H1 (cell line): ENCODE measurements at regions of chr15 and their contacts with region 1.

Region 1: DNA sequence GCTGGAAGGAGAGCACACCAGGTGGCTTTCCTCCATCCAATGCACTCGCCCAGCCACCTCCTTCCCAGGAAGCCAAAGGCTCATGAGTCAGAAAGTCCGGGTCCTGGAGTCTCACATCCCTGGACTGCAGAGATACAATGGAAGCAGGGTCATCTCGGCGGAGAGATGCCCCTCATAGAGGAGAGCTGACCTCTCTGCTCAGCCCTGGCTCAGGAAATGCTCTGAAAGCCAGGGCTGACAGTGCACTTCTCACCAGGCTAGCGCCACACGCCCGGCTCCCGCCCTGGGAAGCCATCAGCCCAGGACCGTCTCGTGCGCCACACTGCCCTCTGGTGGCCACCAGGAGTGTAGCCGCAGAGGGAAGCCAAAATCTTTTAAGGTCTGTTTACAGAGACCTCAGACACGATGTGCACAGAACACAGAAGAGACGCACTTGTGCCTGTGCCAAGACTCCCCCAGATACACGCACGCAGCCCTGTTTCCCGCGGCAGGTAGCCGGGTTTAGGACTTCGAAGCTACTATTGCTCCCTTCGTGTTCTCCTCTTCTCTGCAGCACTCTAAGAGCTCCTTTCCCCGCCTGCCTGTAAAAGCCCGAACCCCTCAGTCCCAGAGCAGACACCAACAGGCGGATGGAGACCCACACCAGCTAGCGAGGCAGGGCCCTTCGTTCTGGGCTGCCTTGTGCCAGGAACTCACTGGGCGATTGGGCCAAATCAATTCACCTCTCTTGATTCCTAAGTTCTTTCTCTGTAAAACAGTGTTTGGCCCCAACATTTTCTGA is 9.7 kb downstream of the NTRK3 start:
- DNase-seq: peak; percentile 70 to 92
- H3K4me3 ChIP-seq: peak overlapping the region in 3 of 4 experiments; percentile 19 to 45 (median 34); a peak in 4 of 8 replicates
- H3K27ac ChIP-seq: no peak overlapping the region
- H3K4me1 ChIP-seq: peaks cover 0 to 7% (median 2%) of the 10 kb centered on the region in 4 experiments; a peak in 3 of 7 replicates
- H3K27me3 ChIP-seq: peaks cover 0 to 4% (median 2%) of the 10 kb centered on the region in 4 experiments; a peak in 3 of 7 replicates
- CTCF ChIP-seq: peak; percentile 92 to 96 (median 95)
- EP300 ChIP-seq: no peak
- POLR2A ChIP-seq: no peak
- RAD21 ChIP-seq: peak; percentile 80 to 85

Region 2: DNA sequence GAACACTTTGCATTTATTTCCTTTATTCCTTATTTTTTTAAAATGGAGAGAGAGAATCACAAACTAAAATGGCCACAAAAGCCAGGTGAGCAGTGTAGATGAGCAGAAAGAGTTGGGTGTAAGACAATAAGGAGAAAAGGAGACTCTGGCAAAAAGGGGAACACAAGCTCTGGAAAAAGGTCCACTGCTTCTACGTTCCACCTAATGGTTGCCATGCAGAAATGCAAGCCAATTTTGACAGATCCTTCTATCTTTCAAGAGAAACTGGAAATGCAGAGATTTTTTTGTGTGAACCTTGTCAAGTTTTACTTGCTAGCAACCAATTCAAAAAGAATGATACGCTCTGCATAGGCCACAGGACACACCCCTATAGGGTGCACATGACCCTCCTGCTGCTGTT is 237.6 kb before region 1 on chr15:
- CTCF ChIA-PET with region 1: interaction called, 26 read pairs
- POLR2A ChIA-PET with region 1: no interaction called
- DNase-seq: no peak
- H3K4me3 ChIP-seq: no peak overlapping the region
- H3K27ac ChIP-seq: no peak overlapping the region
- H3K4me1 ChIP-seq: no peaks in the 10 kb centered on the region
- H3K27me3 ChIP-seq: no peaks in the 10 kb centered on the region
- CTCF ChIP-seq: peak in 1 of 3 experiments; percentile 41; a peak in 2 of 4 replicates
- EP300 ChIP-seq: no peak
- POLR2A ChIP-seq: no peak
- RAD21 ChIP-seq: peak in 1 of 2 experiments; percentile 18; a peak in 1 of 4 replicates

Region 3: GRCh38 chr15:88208410-88208809 is 38.4 kb before region 1 on chr15:
- CTCF ChIA-PET with region 1: interaction called, 53 read pairs
- POLR2A ChIA-PET with region 1: no interaction called
- DNase-seq: no peak
- H3K4me3 ChIP-seq: no peak overlapping the region
- H3K27ac ChIP-seq: no peak overlapping the region
- H3K4me1 ChIP-seq: peaks cover 0 to 6% (median 4%) of the 10 kb centered on the region in 4 experiments; a peak in 2 of 7 replicates
- H3K27me3 ChIP-seq: no peaks in the 10 kb centered on the region; a peak in 1 of 7 replicates
- CTCF ChIP-seq: no peak
- EP300 ChIP-seq: no peak
- POLR2A ChIP-seq: no peak
- RAD21 ChIP-seq: no peak

Region 4: GRCh38 chr15:88258093-88258641 is 11.3 kb after region 1 on chr15:
- CTCF ChIA-PET with region 1: interaction called, 45 read pairs
- POLR2A ChIA-PET with region 1: interaction called, 6 read pairs
- DNase-seq: peak; percentile 44 to 89
- H3K4me3 ChIP-seq: peak overlapping the region; percentile 70 to 91 (median 82)
- H3K27ac ChIP-seq: no peak overlapping the region
- H3K4me1 ChIP-seq: peaks cover 0 to 9% (median 3%) of the 10 kb centered on the region in 4 experiments; a peak in 6 of 7 replicates
- H3K27me3 ChIP-seq: peaks cover 21 to 39% (median 32%) of the 10 kb centered on the region in 4 experiments
- CTCF ChIP-seq: peak; percentile 70 to 92 (median 84)
- EP300 ChIP-seq: no peak
- POLR2A ChIP-seq: no peak
- RAD21 ChIP-seq: peak; percentile 47 to 64

Region 5: DNA sequence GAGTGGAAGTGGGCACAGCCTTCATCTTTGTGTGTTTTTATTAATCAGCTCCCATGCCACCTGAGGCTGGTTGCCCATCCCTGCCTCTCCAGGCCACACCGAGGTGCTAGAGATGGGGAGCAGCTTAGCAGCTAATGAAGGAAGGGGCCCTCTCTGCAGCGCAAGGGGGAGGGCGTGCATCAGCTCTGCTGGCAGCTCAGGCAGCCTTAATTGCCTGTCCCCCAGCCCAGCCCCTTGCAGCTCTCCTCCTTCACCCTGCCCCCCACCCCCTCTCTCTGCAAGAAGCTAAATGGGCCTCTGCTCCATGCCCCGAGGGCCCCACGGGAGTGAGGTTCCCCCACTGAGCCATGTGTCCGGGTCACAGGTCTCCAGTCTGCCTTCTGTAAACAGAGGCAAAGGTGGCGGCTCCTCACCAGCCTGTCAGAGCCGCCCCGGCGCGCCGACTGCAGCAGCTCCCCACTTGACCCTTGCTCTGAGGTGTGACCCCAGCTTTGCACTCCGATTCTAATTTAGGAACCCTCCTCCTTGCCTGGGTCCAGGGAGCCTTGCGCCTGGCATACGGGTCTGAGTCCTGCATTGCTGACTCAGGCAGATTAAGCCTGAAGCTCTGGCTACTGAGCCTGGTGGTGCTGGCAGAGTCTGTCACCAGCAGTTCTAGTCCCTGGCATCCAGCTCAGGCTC is 37.6 kb after region 1 on chr15:
- CTCF ChIA-PET with region 1: interaction called, 16 read pairs
- POLR2A ChIA-PET with region 1: no interaction called
- DNase-seq: no peak
- H3K4me3 ChIP-seq: no peak overlapping the region
- H3K27ac ChIP-seq: no peak overlapping the region
- H3K4me1 ChIP-seq: peaks cover 0 to 12% (median 4%) of the 10 kb centered on the region in 4 experiments; a peak in 5 of 7 replicates
- H3K27me3 ChIP-seq: no peaks in the 10 kb centered on the region; a peak in 1 of 7 replicates
- CTCF ChIP-seq: no peak
- EP300 ChIP-seq: no peak
- POLR2A ChIP-seq: no peak
- RAD21 ChIP-seq: no peak

Region 6: DNA sequence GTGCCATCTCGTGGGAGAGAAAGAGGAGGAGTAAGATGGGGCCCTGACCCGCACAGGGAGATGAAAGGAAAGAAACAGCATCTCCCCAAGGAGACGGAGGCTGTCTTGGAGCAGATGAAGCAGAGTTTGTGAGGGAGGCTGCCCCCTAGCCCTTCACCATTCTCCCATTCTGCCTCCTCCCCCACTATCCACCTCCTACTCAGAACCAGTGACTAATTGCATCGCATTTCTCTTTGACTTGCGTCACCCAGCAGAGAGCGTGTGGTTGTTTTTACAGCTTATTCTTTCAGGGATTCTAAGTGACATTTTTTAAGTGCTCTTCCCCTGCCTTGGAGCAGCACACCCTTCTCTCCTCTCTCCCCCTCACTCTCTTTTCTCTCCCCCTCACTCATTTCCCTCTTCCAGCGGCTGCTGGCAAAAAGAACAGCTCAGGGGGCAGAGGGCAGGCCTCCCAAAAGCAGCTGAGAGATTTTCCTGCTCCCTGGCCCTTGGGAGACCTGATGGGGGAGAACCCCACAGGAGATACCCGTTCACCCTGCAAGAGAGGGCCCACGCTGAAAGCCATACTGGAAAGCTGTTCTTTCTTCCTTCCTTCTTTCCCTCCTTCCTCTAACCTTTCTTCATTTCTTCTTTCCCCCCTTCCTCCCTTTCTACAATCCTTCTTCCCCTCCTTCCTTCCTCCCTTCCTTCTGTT is 128.5 kb after region 1 on chr15:
- CTCF ChIA-PET with region 1: no interaction called
- POLR2A ChIA-PET with region 1: no interaction called
- DNase-seq: peak in 1 of 2 experiments; percentile 41
- H3K4me3 ChIP-seq: no peak overlapping the region
- H3K27ac ChIP-seq: no peak overlapping the region
- H3K4me1 ChIP-seq: peaks cover 0 to 4% (median 3%) of the 10 kb centered on the region in 4 experiments; a peak in 5 of 7 replicates
- H3K27me3 ChIP-seq: 0 out of 7 replicates have a peak, but pooled peaks cover 0 to 4% (median 0%) of the 10 kb centered on the region in 4 experiments
- CTCF ChIP-seq: no peak
- EP300 ChIP-seq: no peak
- POLR2A ChIP-seq: no peak
- RAD21 ChIP-seq: no peak

Region 7: GRCh38 chr15:88454867-88455810 is 208.3 kb after region 1 on chr15:
- CTCF ChIA-PET with region 1: interaction called, 106 read pairs
- POLR2A ChIA-PET with region 1: interaction called, 3 read pairs
- DNase-seq: peak; percentile 56 to 65
- H3K4me3 ChIP-seq: no peak overlapping the region
- H3K27ac ChIP-seq: no peak overlapping the region
- H3K4me1 ChIP-seq: no peaks in the 10 kb centered on the region; a peak in 1 of 7 replicates
- H3K27me3 ChIP-seq: no peaks in the 10 kb centered on the region; a peak in 1 of 7 replicates
- CTCF ChIP-seq: peak; percentile 77 to 98 (median 94)
- EP300 ChIP-seq: no peak
- POLR2A ChIP-seq: no peak
- RAD21 ChIP-seq: peak; percentile 81 to 84

Region 8: DNA sequence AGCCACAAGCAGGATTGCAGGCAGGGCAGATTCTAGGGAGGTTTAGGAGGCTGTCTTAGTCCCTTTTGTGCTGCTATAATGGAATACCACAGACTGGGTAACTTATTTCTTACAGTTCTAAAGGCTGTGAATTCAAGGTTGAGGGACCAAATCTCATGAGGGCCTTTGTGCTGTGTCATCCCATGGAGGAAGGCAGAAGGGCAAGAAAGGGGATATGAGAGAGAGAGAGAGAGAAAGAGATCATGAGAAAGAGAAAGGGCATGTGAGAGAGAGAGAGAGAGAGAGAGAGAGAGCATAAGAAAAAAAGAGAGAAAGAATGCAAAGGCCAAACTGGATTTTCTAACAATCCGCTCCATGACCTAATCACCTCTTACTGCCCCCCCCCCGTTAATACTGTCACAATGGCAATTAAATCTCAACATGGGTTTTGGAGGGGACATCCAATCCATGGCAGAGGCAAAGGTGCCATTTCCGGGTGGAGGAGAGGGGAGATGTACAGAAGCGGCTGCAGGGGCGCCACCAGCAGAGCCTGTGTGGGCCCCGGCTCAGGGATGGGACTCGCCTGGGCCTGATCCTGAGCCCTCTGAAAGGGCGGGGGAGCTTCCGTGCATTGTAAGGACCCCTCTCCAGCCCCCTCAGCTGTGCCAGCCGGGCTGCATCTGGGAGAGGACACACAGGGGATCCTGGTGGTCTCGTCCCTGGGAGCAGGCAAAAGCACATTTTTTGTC is 241.1 kb after region 1 on chr15:
- CTCF ChIA-PET with region 1: no interaction called
- POLR2A ChIA-PET with region 1: no interaction called
- DNase-seq: no peak
- H3K4me3 ChIP-seq: no peak overlapping the region
- H3K27ac ChIP-seq: no peak overlapping the region
- H3K4me1 ChIP-seq: peaks cover 2 to 21% (median 9%) of the 10 kb centered on the region in 4 experiments
- H3K27me3 ChIP-seq: no peaks in the 10 kb centered on the region; a peak in 2 of 7 replicates
- CTCF ChIP-seq: no peak
- EP300 ChIP-seq: no peak
- POLR2A ChIP-seq: no peak
- RAD21 ChIP-seq: no peak